Activated T-helper 1 cell treated with anti-CD3 and anti-CD28 coated beads, Interleukin-12 subunit alpha, Interleukin-12 subunit beta, Interleukin-2, Interleukin-4 antibody, amounts not matched to agents 30 ng/mL and 10 ng/mL and 1 ng/mL, durations not matched to agents 14 hours and 24 hours and 36 hours (primary cell): ENCODE measurements at regions of chr2 and their contacts with region 1.

Region 1: GRCh38 chr2:169928463-169928864 is 101.2 kb downstream of the UBR3 start:
- DNase-seq: no peak
- H3K4me3 Mint-ChIP-seq: no peak overlapping the region
- H3K27ac Mint-ChIP-seq: no peak overlapping the region
- H3K4me1 Mint-ChIP-seq: no peaks in the 10 kb centered on the region
- H3K27me3 Mint-ChIP-seq: no peaks in the 10 kb centered on the region

Region 2: GRCh38 chr2:169452080-169452479 is 476.4 kb before region 1 on chr2:
- intact Hi-C with region 1: loop called (anchors 2 kb)
- DNase-seq: no peak
- H3K4me3 Mint-ChIP-seq: no peak overlapping the region
- H3K27ac Mint-ChIP-seq: no peak overlapping the region
- H3K4me1 Mint-ChIP-seq: no peaks in the 10 kb centered on the region
- H3K27me3 Mint-ChIP-seq: peaks cover under 1% of the 10 kb centered on the region

Region 3: DNA sequence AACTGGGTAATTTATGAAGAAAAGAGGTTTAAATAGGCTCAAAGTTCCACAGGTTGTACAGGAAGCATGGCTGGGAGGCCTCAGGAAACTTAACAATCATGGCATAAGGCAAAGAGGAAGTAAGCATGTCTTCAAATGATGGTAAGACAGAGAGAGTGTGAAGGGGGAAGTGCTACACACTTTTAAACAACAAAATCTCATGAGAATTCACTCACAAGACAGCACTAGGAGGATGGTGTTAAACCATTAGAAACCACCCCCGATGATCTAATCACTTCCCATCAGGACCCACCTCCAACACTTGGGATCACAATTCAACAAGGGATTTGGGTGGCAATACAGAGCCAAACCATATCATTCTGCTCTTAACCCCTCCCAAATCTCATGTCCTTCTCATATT is 269.1 kb before region 1 on chr2:
- intact Hi-C with region 1: no loop called
- DNase-seq: no peak
- H3K4me3 Mint-ChIP-seq: no peak overlapping the region
- H3K27ac Mint-ChIP-seq: no peak overlapping the region
- H3K4me1 Mint-ChIP-seq: no peaks in the 10 kb centered on the region
- H3K27me3 Mint-ChIP-seq: peaks cover 11% of the 10 kb centered on the region

Region 4: DNA sequence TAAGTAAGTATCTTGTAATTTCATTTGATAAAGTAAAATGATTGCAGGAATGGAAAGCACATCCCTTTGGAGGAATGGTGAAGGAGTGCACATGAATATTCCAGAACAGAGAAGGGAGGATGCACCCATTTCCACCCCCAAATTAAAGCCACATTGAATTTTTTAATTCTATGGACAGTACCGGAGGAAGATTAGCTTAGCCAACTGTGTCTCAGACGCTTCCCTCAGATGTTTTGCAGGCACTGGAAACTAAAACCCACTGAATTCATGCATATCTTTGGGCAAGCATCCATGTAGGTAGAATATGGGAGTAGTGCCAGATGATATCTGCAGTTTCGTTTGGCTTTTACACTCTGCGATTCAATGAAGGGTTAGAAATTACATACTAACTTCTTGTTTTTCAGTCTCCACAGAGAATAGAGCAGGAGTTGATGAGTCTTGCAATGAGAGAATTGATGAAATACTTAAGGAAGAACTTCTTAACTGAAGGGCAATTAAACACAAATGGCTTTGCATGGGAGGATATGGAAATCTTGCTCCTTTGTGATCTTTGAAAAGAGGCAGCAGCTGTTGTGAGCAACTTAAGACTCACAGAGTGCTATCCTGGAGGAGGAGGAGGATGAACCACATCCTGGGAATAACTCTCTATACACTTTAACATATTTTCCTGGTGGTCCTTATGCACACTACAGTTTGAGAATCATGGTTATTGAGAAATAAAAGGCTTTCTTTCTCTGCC is 177.8 kb after region 1 on chr2:
- intact Hi-C with region 1: no loop called
- DNase-seq: no peak
- H3K4me3 Mint-ChIP-seq: no peak overlapping the region
- H3K27ac Mint-ChIP-seq: no peak overlapping the region
- H3K4me1 Mint-ChIP-seq: no peaks in the 10 kb centered on the region
- H3K27me3 Mint-ChIP-seq: peaks cover 6% of the 10 kb centered on the region